Colonic mucosa (tissue), 4 donors: ENCODE measurements at regions of chr1 and their contacts with region 1.

Region 1: DNA sequence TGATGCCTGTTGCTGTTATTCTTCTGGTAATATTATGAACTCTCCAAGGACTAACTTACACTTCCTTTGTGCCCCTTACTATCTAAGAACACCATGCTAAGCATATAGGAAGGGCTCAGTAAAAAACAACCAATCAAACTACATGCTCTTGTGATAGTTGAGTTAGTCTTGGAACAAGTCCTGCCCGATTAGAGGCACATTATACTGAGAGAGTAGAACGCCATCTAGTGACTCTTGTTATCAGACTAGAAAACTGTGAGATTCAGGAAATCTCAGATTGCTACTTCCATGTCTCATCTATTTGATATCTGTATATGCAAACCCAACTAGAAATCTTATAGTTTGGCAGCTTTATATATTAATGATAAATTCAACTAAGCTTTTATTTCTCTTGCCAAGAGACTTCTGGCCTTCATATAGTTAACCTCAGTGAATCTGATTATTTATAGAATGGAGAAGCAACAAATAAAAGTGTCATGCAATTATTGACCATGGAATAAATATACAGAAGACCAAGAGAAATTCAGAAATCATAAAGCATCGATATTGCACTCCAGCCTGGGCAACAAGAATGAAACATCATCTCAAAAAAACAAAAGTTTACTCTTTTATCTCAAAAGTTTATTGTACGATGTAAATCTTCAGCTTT is 7.8 kb upstream of the SRRM1 start:
- DNase-seq: no peak
- H3K4me3 ChIP-seq: no peak overlapping the region
- H3K27ac ChIP-seq: no peak overlapping the region
- H3K4me1 ChIP-seq: no peaks in the 10 kb centered on the region
- H3K27me3 ChIP-seq: no peaks in the 10 kb centered on the region
- CTCF ChIP-seq: peak; percentile 38

Region 2: DNA sequence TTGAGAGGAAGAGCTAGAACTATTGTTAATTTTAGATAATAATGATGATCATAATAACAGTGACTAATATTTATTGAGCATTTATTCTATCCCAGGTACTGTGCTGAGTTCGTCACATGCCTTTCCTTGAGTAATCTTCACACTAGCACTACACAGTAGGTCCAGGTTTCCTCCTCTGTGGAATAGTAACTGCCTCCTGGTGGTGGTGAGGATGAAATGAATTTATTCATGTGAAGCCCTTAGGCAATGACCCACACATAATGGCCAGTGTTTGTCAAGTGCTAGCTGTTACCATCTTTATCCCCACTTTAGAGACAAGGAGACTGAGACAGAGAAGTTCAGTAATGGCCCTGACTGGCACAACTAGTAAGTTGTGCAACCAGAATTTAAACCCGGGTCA is 213.8 kb before region 1 on chr1:
- intact Hi-C with region 1: loop called (anchors 10 kb)
- DNase-seq: no peak
- H3K4me3 ChIP-seq: no peak overlapping the region
- H3K27ac ChIP-seq: no peak overlapping the region
- H3K4me1 ChIP-seq: peaks cover 7% of the 10 kb centered on the region
- H3K27me3 ChIP-seq: no peaks in the 10 kb centered on the region
- CTCF ChIP-seq: no peak

Region 3: DNA sequence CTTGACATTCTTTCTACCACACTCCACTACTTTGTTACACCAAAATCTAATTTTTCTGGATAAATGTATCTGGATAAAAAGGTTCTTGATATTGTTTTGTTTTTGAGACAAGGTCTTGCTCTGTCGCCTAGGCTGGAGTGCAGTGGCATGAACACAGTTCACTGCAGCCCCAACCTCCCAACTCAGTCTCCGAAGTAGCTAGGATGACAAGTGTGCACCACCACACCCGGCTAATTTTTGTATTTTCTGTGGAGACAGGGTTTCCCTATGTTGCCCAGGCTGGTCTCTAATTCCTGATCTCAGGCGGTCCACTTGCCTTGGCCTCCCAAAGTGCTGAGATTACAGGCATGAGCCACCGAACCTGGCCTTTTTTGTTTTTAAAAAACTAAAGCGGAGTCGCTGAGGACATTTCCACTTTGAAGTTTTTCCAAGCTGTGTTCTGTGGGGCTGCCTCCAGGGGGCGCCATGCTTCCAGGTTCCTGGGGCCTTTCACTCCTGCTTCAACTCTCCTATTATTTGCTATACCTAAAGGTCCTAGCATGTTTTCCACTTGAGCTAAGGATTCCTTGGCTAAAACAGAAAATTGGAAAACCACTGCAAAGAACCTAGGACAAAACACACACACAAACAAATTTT is 93.5 kb before region 1 on chr1:
- intact Hi-C with region 1: loop called (anchors 10 kb)
- DNase-seq: peak; percentile 55
- H3K4me3 ChIP-seq: no peak overlapping the region
- H3K27ac ChIP-seq: peak overlapping the region; percentile 62
- H3K4me1 ChIP-seq: peaks cover 5% of the 10 kb centered on the region
- H3K27me3 ChIP-seq: no peaks in the 10 kb centered on the region
- CTCF ChIP-seq: peak; percentile 71